CD8-positive, alpha-beta memory T cell (primary cell): ENCODE measurements at regions of chr16 and their contacts with region 1.

Region 1: GRCh38 chr16:3498988-3499387 is 1.8 kb upstream of the CLUAP1 start:
- DNase-seq: peak in 1 of 5 donors; percentile 37
- H3K4me3 ChIP-seq: no peak overlapping the region
- H3K4me3 Mint-ChIP-seq: peak overlapping the region in 2 of 7 donors; percentile 23 to 77
- H3K27ac ChIP-seq: no peak overlapping the region
- H3K27ac Mint-ChIP-seq: peak overlapping the region in 2 of 8 donors; percentile 66 to 94
- H3K4me1 ChIP-seq: peaks cover 32% of the 10 kb centered on the region
- H3K4me1 Mint-ChIP-seq: peaks cover 38 to 42% (median 42%) of the 10 kb centered on the region in 3 donors
- H3K27me3 ChIP-seq: no peaks in the 10 kb centered on the region
- H3K27me3 Mint-ChIP-seq: no peaks in the 10 kb centered on the region

Region 2: GRCh38 chr16:3509470-3509928 is 10.5 kb after region 1 on chr16:
- CTCF ChIA-PET with region 1: interaction called, 7 read pairs
- POLR2A ChIA-PET with region 1: interaction called, 12 read pairs
- DNase-seq: peak; percentile 44 to 91 (median 79)
- H3K4me3 ChIP-seq: no peak overlapping the region
- H3K4me3 Mint-ChIP-seq: peak overlapping the region; percentile 8 to 86 (median 65)
- H3K27ac ChIP-seq: no peak overlapping the region
- H3K27ac Mint-ChIP-seq: peak overlapping the region; percentile 51 to 97 (median 90)
- H3K4me1 ChIP-seq: peaks cover 34% of the 10 kb centered on the region
- H3K4me1 Mint-ChIP-seq: peaks cover 32 to 63% (median 58%) of the 10 kb centered on the region in 3 donors
- H3K27me3 ChIP-seq: no peaks in the 10 kb centered on the region
- H3K27me3 Mint-ChIP-seq: no peaks in the 10 kb centered on the region